Activated CD8-positive, alpha-beta T cell treated with anti-CD3 and anti-CD28 coated beads, Interleukin-2, amount 10 ng/mL, durations not matched to agents 7 days and 5 days (primary cell): ENCODE measurements at regions of chr19 and their contacts with region 1.

Region 1: DNA sequence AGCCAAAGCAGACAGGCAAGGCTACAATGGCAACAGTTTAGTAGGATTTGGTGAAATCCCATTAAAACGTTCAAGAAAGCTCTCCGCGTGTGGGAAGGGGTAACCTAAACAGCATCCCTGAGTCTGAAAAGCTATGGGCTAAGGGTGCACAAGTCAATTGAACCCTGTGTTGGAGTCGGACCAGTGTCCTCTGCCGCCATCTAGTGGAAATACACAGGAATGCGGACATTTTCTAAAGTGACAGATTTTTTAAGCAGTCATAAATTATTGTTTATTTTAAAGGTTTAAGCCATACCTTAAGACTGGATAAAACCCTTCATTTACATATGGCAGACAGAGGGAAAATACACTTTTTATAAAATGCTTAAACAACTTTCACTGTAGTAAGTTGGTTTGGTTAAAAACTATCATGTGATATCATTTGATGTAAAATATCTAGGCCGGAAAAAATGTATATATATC is 26.5 kb upstream of the LSM14A start:
- DNase-seq: peak; percentile 72
- ATAC-seq: peak; percentile 68
- H3K4me3 Mint-ChIP-seq: no peak overlapping the region
- H3K27ac Mint-ChIP-seq: no peak overlapping the region
- H3K4me1 Mint-ChIP-seq: no peaks in the 10 kb centered on the region
- H3K27me3 Mint-ChIP-seq: no peaks in the 10 kb centered on the region

Region 2: DNA sequence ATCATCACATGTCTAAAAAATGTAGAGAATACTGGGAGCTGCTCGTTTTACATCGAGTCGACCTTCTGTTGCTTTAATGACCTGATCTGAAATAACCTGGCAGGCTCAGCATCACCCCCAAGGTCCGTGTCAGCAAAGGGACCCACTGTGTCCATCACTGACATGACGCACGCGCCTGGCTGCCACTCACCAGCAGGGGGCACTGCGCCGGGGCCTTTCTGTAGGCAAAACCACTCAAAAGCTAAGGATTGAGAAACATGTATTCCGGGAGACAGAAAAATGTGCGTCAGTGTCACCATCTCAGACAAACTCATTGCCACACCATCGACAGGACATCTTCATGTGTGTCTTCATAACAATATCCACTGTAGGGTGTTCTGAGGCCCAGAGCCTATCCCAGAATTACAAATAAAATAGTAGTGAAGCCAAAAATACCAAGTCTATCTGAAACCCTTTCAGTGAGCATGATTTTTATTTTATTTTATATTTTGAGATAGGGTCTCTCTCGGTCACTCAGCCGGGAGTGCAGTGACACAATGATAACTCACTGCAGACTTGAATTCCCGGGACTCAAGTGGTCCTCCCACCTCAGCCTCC is 103.7 kb before region 1 on chr19:
- CTCF ChIA-PET with region 1: interaction called, 40 read pairs
- POLR2A ChIA-PET with region 1: no interaction called
- DNase-seq: peak; percentile 75
- ATAC-seq: no peak
- H3K4me3 Mint-ChIP-seq: no peak overlapping the region
- H3K27ac Mint-ChIP-seq: no peak overlapping the region
- H3K4me1 Mint-ChIP-seq: no peaks in the 10 kb centered on the region
- H3K27me3 Mint-ChIP-seq: no peaks in the 10 kb centered on the region

Region 3: GRCh38 chr19:34066007-34066643 is 79.6 kb before region 1 on chr19:
- CTCF ChIA-PET with region 1: no interaction called
- POLR2A ChIA-PET with region 1: no interaction called
- DNase-seq: no peak
- ATAC-seq: no peak
- H3K4me3 Mint-ChIP-seq: no peak overlapping the region
- H3K27ac Mint-ChIP-seq: no peak overlapping the region
- H3K4me1 Mint-ChIP-seq: no peaks in the 10 kb centered on the region
- H3K27me3 Mint-ChIP-seq: peaks cover 6% of the 10 kb centered on the region

Region 4: DNA sequence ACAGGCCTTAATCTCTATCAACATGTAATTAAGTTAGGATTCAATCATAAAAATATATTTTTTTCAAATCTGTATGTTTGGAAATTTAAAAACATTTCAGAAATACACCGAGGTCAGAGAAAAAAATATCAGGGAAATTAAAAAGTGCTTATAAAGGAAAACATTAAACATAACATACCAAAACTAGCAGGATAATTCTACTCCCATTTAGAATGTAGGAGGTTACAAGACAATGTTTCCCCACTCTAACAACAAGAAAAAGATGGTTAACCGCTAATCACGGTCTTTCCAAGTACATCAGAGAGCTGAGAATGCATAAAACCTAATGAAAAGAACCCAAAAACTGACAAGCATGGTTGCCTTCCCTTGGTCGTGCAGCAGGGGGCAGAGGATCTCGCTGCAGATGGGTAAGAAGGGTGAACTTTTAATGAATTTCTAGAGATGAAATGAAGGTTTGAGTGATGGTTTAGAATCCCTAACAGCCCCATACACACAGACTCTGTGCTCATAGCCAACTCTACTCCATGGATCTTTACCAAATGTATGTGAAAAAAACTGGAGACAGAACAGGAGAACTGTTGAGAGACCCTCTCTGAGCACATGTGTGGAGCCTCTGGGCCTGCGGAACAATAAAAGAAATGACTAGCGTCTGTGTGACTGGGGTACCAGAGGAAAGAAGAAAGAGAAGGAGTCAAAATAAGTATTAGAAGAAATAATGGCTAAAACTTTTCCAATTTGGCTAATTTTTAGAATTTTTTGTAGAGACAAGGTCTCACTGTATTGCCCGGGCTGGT is 24.7 kb before region 1 on chr19:
- CTCF ChIA-PET with region 1: interaction called, 47 read pairs
- POLR2A ChIA-PET with region 1: no interaction called
- DNase-seq: peak; percentile 67
- ATAC-seq: peak; percentile 53
- H3K4me3 Mint-ChIP-seq: no peak overlapping the region
- H3K27ac Mint-ChIP-seq: no peak overlapping the region
- H3K4me1 Mint-ChIP-seq: peaks cover 9% of the 10 kb centered on the region
- H3K27me3 Mint-ChIP-seq: peaks cover 5% of the 10 kb centered on the region

Region 5: GRCh38 chr19:34173193-34173956 is 27.6 kb after region 1 on chr19:
- CTCF ChIA-PET with region 1: no interaction called
- POLR2A ChIA-PET with region 1: no interaction called
- DNase-seq: peak; percentile 41
- ATAC-seq: no peak
- H3K4me3 Mint-ChIP-seq: peak overlapping the region; percentile 98
- H3K27ac Mint-ChIP-seq: peak overlapping the region; percentile 99
- H3K4me1 Mint-ChIP-seq: peaks cover 50% of the 10 kb centered on the region
- H3K27me3 Mint-ChIP-seq: peaks cover 2% of the 10 kb centered on the region

Region 6: GRCh38 chr19:34201133-34201532 is 55.4 kb after region 1 on chr19:
- CTCF ChIA-PET with region 1: no interaction called
- POLR2A ChIA-PET with region 1: no interaction called
- DNase-seq: no peak
- ATAC-seq: no peak
- H3K4me3 Mint-ChIP-seq: no peak overlapping the region
- H3K27ac Mint-ChIP-seq: no peak overlapping the region
- H3K4me1 Mint-ChIP-seq: no peaks in the 10 kb centered on the region
- H3K27me3 Mint-ChIP-seq: no peaks in the 10 kb centered on the region

Region 7: GRCh38 chr19:34224996-34225658 is 79.4 kb after region 1 on chr19:
- CTCF ChIA-PET with region 1: no interaction called
- POLR2A ChIA-PET with region 1: no interaction called
- DNase-seq: no peak
- ATAC-seq: no peak
- H3K4me3 Mint-ChIP-seq: no peak overlapping the region
- H3K27ac Mint-ChIP-seq: no peak overlapping the region
- H3K4me1 Mint-ChIP-seq: peaks cover 40% of the 10 kb centered on the region
- H3K27me3 Mint-ChIP-seq: no peaks in the 10 kb centered on the region